Natural killer cell (primary cell): ENCODE measurements at regions of chr9 and their contacts with region 1.

Region 1: GRCh38 chr9:85610074-85610860 is 131.5 kb downstream of the AGTPBP1 start:
- DNase-seq: peak in 1 of 2 donors; percentile 86
- ATAC-seq: peak; percentile 90 to 99 (median 97)
- H3K4me3 ChIP-seq: no peak overlapping the region
- H3K4me3 Mint-ChIP-seq: no peak overlapping the region
- H3K27ac ChIP-seq: peak overlapping the region; percentile 42
- H3K27ac Mint-ChIP-seq: peak overlapping the region; percentile 67 to 86
- H3K4me1 ChIP-seq: no peaks in the 10 kb centered on the region
- H3K4me1 Mint-ChIP-seq: peaks cover 11 to 12% of the 10 kb centered on the region in 2 donors
- H3K27me3 ChIP-seq: no peaks in the 10 kb centered on the region
- H3K27me3 Mint-ChIP-seq: no peaks in the 10 kb centered on the region
- CTCF ChIP-seq: peak; percentile 83

Region 2: GRCh38 chr9:84697509-84698114 is 912.7 kb before region 1 on chr9:
- intact Hi-C with region 1: loop called (anchors 5 kb)
- DNase-seq: peak; percentile 25 to 41
- ATAC-seq: no peak
- H3K4me3 ChIP-seq: no peak overlapping the region
- H3K4me3 Mint-ChIP-seq: no peak overlapping the region
- H3K27ac ChIP-seq: no peak overlapping the region
- H3K27ac Mint-ChIP-seq: no peak overlapping the region
- H3K4me1 ChIP-seq: no peaks in the 10 kb centered on the region
- H3K4me1 Mint-ChIP-seq: peaks cover 0 to 10% of the 10 kb centered on the region in 2 donors
- H3K27me3 ChIP-seq: peaks cover 2% of the 10 kb centered on the region
- H3K27me3 Mint-ChIP-seq: peaks cover 15 to 37% of the 10 kb centered on the region in 2 donors
- CTCF ChIP-seq: peak; percentile 28

Region 3: DNA sequence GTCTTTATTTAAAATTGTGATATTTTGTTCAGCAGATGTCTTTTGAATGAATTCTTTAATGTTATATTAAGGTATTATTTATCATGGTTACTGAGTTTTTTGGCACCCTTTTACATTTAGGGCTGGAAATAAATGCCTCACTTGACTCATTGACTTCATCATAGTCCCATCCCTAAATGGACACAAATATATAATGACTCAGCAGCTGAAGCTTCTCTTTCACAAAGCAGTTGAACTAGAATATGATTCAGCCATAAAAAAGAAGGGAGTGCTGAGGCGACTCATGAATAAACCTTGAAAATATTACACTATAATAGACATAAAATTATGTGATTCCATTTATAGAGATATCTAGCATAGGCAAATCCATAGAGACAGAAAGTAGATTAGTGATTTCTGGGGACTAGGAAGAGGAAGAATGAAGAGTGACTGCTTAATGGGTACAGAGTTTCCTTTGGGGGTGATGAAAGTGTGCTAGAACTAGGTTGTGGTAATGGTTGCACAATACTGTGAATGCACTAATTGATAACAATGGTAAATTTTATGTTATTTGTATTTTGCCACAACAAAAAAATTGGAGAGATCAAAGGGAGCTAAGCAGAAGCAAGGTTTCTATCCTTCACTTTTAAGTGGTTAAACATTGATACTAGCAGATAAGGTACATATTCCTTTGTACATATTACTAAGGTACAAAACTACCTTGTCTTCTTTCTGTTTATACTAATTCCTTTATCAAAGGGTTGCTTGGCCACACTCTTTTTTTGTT is 491.1 kb before region 1 on chr9:
- intact Hi-C with region 1: no loop called
- DNase-seq: no peak
- ATAC-seq: no peak
- H3K4me3 ChIP-seq: no peak overlapping the region
- H3K4me3 Mint-ChIP-seq: no peak overlapping the region
- H3K27ac ChIP-seq: no peak overlapping the region
- H3K27ac Mint-ChIP-seq: no peak overlapping the region
- H3K4me1 ChIP-seq: no peaks in the 10 kb centered on the region
- H3K4me1 Mint-ChIP-seq: no peaks in the 10 kb centered on the region
- H3K27me3 ChIP-seq: peaks cover 4% of the 10 kb centered on the region
- H3K27me3 Mint-ChIP-seq: peaks cover 22 to 34% of the 10 kb centered on the region in 2 donors
- CTCF ChIP-seq: no peak

Region 4: DNA sequence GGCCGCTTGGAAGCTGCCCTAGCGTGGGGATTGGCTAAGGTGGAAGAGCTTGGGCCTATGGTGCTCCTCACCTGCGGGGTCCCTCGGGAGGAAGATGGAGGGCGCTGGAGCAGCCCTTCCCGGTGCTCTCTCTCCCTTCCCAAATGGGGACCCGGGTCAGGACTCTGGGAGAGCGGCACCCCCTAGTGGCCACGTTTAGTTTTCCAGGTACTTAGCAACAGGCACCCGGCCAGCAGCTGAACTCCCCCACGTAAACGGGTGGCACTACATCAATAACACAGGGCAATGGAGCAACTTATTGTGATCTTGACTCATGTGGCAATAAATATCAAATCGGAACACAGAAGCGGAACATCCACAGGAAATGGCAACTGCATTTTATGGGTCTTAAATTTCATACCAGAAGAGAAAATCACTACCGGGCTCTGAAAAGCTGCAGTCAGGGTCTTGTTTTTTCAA is 185.1 kb before region 1 on chr9:
- intact Hi-C with region 1: loop called (anchors 10 kb)
- DNase-seq: peak; percentile 47 to 59
- ATAC-seq: peak; percentile 71 to 83 (median 78)
- H3K4me3 ChIP-seq: no peak overlapping the region
- H3K4me3 Mint-ChIP-seq: no peak overlapping the region
- H3K27ac ChIP-seq: no peak overlapping the region
- H3K27ac Mint-ChIP-seq: peak overlapping the region in 1 of 2 donors; percentile 60
- H3K4me1 ChIP-seq: peaks cover 9% of the 10 kb centered on the region
- H3K4me1 Mint-ChIP-seq: peaks cover 20 to 21% of the 10 kb centered on the region in 2 donors
- H3K27me3 ChIP-seq: peaks cover 4% of the 10 kb centered on the region
- H3K27me3 Mint-ChIP-seq: peaks cover 21 to 42% of the 10 kb centered on the region in 2 donors
- CTCF ChIP-seq: peak; percentile 81

Region 5: DNA sequence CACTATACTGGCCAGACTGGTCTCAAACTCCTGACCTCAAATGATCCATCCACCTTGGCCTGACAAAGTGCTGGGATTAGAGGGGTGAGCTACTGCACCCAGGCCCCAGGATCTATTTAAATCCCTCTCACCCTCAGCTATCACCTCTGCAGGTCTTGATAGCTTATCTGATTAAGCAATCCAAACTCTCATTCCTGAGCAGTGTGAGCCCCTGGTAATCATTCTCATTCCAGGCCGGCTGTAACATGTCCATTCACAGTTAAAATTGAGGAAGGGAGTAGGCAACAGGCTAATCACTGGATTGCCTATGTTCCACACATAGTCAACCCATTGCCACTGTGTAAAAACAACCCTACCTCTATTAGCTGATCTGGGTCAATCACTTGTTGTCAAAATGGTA is 20.4 kb after region 1 on chr9:
- intact Hi-C with region 1: no loop called
- DNase-seq: no peak
- ATAC-seq: no peak
- H3K4me3 ChIP-seq: no peak overlapping the region
- H3K4me3 Mint-ChIP-seq: no peak overlapping the region
- H3K27ac ChIP-seq: no peak overlapping the region
- H3K27ac Mint-ChIP-seq: peak overlapping the region in 1 of 2 donors; percentile 41
- H3K4me1 ChIP-seq: no peaks in the 10 kb centered on the region
- H3K4me1 Mint-ChIP-seq: peaks cover 22 to 29% of the 10 kb centered on the region in 2 donors
- H3K27me3 ChIP-seq: no peaks in the 10 kb centered on the region
- H3K27me3 Mint-ChIP-seq: no peaks in the 10 kb centered on the region
- CTCF ChIP-seq: no peak